Astrocyte of the cerebellum (primary cell): ENCODE measurements at regions of chr2 and their contacts with region 1.

Region 1: DNA sequence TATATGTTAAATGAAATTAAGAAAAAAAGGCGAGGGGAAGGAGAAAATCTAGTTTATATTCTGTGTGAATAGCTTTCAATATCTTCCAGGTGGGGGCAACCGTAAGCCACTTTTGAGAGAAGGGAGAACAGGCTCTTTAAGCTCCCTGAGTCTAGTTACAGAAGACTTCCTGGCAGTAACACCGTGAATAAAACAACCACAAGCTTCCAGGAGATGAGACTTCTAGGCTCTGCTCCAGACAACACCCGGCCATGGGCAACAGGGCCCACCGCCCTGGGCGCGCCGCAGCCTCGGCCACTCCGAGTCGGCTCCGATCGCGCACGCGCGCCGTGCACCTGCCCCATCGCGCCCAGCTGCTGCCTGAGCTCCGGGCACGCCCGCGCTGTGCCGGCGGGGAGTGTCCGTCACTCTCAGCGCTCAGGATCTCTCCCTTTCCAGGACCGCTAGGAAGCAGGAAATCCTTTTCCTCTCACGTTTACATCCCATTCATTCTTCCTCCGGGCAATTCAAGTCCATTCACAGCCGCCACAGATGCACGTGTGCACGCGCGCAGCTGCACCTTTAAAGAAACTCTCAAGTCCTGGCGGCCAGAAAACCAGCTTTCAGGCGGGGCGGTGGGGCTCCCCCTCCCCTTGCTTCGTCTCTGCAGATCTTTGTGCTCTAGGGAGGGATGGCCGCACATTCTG is 19.4 kb upstream of the PAX3 start:
- DNase-seq: peak; percentile 78
- H3K4me3 ChIP-seq: peak overlapping the region; percentile 51
- CTCF ChIP-seq: peak; percentile 58

Region 2: GRCh38 chr2:222024932-222025880 is 293.0 kb before region 1 on chr2:
- in situ Hi-C with region 1: loop called (anchors 25 kb)
- DNase-seq: peak; percentile 59
- H3K4me3 ChIP-seq: no peak overlapping the region
- CTCF ChIP-seq: peak; percentile 71

Region 3: GRCh38 chr2:222982010-222982908 is 664.1 kb after region 1 on chr2:
- in situ Hi-C with region 1: no loop called
- DNase-seq: peak; percentile 39
- H3K4me3 ChIP-seq: no peak overlapping the region
- CTCF ChIP-seq: peak; percentile 64